ENCODE measurements at regions of chr14 and their contacts with region 1.

Region 1: DNA sequence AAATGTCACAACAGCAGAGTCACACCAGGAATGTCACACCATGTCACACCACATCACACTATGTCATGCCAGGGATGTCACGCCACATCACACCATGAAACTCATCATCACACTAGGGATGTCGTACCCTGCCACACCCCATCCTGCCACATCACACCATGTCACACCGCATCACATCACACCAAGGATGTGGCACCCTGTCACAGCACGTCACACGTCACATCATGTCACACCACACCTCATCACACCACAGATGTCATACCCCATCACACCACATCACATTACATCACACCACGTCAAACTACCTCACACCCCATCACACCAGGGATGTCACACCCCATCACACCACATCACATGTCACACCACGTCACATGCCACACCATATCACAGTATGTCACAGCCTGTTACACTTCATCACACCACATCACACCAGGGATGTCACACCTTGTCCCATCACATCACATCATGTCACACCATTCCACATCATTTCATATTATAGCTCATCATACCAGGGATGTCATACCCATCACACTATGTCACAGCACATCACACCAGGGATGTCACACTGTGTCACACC is 90.9 kb downstream of the TMEM121 start:
- DNase-seq: no peak
- ATAC-seq: peak in 2 of 4 donors; percentile 37 to 40
- H3K4me3 ChIP-seq: no peak overlapping the region
- H3K27ac ChIP-seq: no peak overlapping the region
- H3K4me1 ChIP-seq: no peaks in the 10 kb centered on the region
- H3K27me3 ChIP-seq: no peaks in the 10 kb centered on the region
- CTCF ChIP-seq: no peak
- POLR2A ChIP-seq: no peak

Region 2: DNA sequence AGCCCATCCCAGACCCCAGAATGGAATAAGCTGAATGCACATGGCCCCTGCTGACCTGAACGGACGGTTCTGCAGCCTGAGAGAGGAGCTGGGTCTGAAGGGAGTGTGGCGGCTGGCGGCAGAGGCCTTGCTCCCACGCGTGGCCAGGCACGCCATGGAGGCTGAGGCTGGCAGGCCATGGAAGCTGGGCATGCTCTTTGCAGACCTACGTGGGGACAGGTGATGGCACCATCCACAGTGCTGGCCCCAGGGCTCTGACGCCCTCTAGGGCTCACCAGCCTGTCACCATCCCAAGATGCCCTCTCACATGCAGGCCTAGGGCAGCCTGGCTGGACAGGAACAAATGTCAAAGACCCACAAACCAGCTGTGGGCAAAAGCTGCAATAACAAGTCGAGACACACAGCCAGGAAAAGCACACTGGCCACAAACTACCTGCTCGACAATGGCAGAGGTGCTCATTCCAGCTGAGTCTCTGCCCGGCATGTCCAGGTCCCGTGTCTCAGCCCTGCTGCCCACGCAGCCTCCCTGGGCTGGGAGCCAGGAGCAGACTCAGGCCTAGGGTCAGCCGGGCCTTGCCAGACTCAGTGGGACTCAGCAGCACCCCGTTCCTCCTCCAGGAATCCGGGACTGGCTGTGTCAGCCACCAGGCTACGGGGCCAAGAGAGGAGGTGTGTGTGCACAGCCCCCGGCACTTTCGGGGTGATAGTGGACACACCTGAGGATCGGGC is 349.3 kb before region 1 on chr14:
- intact Hi-C with region 1: no loop called
- DNase-seq: no peak
- ATAC-seq: peak; percentile 67 to 85 (median 70)
- H3K4me3 ChIP-seq: no peak overlapping the region
- H3K27ac ChIP-seq: no peak overlapping the region
- H3K4me1 ChIP-seq: no peaks in the 10 kb centered on the region
- H3K27me3 ChIP-seq: no peaks in the 10 kb centered on the region
- CTCF ChIP-seq: peak in 2 of 4 donors; percentile 13 to 25
- POLR2A ChIP-seq: no peak

Region 3: DNA sequence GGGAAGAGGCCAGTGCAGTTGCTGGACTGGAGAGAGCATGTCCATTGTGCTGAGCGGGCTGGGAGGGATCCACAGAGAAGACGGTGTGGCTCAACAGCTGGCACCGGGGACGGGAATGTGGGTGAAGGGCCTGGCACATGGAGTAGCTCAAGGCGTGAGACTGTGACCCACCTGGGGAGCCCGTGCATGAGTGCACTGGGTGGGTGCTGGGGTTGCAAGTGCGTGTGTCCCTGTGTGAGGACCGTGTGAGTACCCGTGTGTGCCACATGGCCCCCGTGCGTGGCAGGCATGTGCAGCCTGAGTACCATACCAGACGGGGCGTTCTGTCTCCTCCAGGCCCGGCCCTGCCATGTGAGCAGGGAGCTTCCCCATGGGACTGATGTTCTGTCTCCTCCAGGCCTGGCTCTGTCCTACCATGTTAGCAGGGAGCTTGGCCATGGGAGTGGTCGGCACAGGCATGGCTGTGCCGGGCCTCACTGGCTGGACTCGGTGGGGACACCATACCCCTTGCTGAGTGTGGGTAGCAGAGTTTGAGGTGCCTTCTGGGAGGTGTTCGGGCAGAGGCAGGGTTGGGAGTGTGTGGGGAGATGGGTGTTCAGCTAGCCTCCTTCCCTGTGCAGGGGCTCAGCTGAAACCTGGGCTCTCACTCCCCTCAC is 143.5 kb after region 1 on chr14:
- intact Hi-C with region 1: loop called in 1 of 2 experiments (anchors 5 kb)
- DNase-seq: peak in 2 of 3 donors; percentile 12 to 35
- ATAC-seq: peak in 2 of 4 donors; percentile 40 to 43
- H3K4me3 ChIP-seq: no peak overlapping the region
- H3K27ac ChIP-seq: no peak overlapping the region
- H3K4me1 ChIP-seq: peaks cover 0 to 6% (median 0%) of the 10 kb centered on the region in 4 donors
- H3K27me3 ChIP-seq: no peaks in the 10 kb centered on the region
- CTCF ChIP-seq: no peak
- POLR2A ChIP-seq: no peak

Measured in right lobe of liver (tissue), 6 donors.